A549 (cell line): ENCODE measurements at regions of chr15 and their contacts with region 1.

Region 1: DNA sequence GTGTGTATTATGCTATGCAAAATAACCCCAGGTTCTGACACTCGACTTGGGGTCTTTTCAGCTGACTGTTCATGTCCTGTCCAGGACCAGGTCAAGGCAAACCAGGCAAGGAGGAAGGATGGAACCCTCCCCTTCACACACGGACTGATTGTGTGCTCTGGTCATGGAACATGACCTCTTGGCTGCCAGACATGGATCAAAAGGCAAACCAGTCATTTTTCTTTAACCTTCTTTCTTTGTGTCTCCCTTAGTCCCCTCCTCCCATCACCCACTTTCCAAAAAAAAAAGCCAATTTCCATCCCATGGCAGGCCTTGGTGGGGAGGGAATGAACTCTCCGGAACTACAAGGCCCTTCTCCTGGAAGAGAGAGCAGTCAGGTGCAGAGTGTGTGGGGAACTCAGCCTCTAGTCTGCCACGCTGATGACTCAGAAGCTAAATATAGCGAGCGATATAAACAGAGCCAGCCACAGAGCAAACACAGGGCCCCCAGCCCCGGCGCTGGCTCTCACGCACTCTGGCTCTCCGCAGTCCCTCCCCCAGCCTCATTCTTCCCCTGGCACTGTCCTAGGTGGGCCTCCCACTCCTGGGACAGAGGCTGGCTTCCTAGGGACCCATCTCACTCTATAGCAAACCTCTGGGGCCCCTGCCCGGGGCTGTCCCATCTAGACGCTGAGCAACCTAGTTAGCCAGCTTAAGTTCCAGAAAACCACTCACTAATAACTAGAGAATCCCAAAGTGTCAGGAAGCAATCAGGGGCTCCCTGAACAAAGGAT is 10.0 kb downstream of the BMF start:
- DNase-seq: peak; percentile 83 to 90
- ATAC-seq: peak; percentile 97
- H3K4me3 ChIP-seq: no peak overlapping the region
- H3K27ac ChIP-seq: peak overlapping the region; percentile 68 to 81
- H3K4me1 ChIP-seq: peaks cover 52% of the 10 kb centered on the region
- CTCF ChIP-seq: no peak
- EP300 ChIP-seq: peak; percentile 37 to 43; a peak in 2 of 5 replicates
- POLR2A ChIP-seq: no peak
- RAD21 ChIP-seq: no peak; a peak in 2 of 5 replicates

Region 2: DNA sequence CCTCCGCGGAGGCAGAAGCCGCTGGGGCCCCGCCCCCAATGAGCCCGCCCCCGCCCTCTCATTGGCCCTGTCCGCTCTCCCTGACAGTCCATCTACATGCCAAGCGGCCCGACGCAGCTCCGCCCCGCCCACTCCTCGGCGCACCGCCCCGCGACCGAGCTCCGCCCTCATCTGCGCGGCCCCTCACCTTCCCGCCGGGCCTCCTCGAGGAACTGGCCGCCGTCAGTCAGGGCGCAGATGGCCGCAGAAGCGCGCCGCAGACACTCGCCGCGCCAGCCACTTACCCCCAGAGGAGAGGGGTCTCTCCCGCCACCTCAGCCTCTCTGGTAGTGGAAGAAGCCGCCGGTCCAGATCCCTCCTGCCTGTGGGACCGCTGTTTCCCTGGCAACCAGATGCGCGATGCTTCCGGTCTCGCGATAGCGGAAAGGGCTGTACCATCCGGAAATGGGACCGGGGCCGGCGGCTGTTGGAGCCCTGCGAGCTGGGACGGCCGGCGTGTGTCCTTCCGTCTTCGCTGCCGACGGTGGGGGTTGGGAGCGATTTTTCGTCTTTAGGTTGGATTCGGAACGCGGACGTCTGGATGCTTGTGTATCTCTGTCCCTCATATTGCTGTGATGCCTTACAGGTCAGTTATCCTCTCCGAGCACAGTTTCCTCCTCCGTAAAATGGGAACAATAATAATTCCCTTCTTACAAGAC is 316.1 kb before region 1 on chr15 and contains the start of gene FSIP1:
- CTCF ChIA-PET with region 1: no interaction called
- POLR2A ChIA-PET with region 1: no interaction called
- DNase-seq: peak; percentile 86 to 94
- ATAC-seq: peak; percentile 98 to 99
- H3K4me3 ChIP-seq: peak within 1 kb of the TSS; percentile 76
- H3K27ac ChIP-seq: peak within 1 kb of the TSS; percentile 79 to 88
- H3K4me1 ChIP-seq: peaks cover 15% of the 10 kb centered on the region; the same call in 2 of the 3 replicates
- CTCF ChIP-seq: no peak
- EP300 ChIP-seq: no peak
- POLR2A ChIP-seq: peak; percentile 59
- RAD21 ChIP-seq: no peak
- polyA plus RNA-seq, gene FSIP1: 0.82 and 0.93 TPM in 2 replicates

Region 3: DNA sequence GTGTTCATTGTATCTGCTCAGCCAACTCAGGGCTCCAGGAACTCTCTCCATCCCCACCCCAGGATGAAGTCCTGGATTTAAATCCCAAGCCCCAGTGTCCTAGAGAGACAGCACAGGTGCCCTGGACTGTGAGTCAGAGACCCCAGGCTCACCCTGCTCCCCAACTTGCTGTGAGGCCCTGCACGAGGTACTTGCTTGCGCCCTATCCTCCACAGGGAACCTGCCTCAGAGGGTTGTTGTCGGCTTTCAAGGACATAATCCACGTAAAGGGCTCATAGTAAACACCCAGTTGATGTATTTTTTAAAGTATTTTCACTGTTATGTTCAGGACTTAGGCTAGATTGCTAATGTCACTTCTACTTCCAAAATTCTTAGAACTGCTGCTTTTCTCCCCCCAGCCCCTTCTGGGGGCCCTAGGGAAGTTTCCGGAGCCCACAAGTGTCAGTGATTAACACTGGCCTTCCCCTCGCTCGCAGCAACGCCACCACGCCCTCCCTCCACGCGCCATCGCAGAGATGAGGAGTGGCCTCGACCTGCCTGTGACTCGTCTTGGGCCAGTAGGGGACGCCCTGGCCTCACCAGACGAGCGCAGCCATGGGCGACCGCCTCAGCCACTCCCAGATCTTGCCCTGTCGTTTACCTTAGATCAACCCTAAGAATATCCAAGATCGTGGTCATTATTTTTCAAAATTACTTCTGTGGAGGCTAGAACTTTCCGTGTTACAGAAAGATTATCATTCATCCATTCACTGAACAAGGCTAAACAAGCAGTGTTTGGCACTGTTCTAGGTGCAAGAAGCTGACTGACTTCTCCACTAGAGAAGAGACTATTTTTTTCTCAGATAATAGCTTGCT is 53.7 kb before region 1 on chr15:
- CTCF ChIA-PET with region 1: interaction called, 174 read pairs
- POLR2A ChIA-PET with region 1: no interaction called
- DNase-seq: peak; percentile 78 to 84
- ATAC-seq: peak; percentile 94 to 98
- H3K4me3 ChIP-seq: peak overlapping the region; percentile 29
- H3K27ac ChIP-seq: peak overlapping the region; percentile 61 to 85
- H3K4me1 ChIP-seq: peaks cover 45% of the 10 kb centered on the region
- CTCF ChIP-seq: peak; percentile 83
- EP300 ChIP-seq: no peak
- POLR2A ChIP-seq: no peak
- RAD21 ChIP-seq: peak; percentile 93 to 97

Region 4: GRCh38 chr15:40367686-40368611 is 269.3 kb after region 1 on chr15:
- CTCF ChIA-PET with region 1: no interaction called
- POLR2A ChIA-PET with region 1: no interaction called
- DNase-seq: peak; percentile 70 to 87
- ATAC-seq: peak; percentile 88 to 92
- H3K4me3 ChIP-seq: peak overlapping the region; percentile 33
- H3K27ac ChIP-seq: peak overlapping the region; percentile 55 to 87; a peak in 5 of 6 replicates
- H3K4me1 ChIP-seq: 0 out of 3 replicates have a peak, but pooled peaks cover 7% of the 10 kb centered on the region
- CTCF ChIP-seq: peak; percentile 81
- EP300 ChIP-seq: no peak
- POLR2A ChIP-seq: no peak
- RAD21 ChIP-seq: peak; percentile 35 to 62

Region 5: DNA sequence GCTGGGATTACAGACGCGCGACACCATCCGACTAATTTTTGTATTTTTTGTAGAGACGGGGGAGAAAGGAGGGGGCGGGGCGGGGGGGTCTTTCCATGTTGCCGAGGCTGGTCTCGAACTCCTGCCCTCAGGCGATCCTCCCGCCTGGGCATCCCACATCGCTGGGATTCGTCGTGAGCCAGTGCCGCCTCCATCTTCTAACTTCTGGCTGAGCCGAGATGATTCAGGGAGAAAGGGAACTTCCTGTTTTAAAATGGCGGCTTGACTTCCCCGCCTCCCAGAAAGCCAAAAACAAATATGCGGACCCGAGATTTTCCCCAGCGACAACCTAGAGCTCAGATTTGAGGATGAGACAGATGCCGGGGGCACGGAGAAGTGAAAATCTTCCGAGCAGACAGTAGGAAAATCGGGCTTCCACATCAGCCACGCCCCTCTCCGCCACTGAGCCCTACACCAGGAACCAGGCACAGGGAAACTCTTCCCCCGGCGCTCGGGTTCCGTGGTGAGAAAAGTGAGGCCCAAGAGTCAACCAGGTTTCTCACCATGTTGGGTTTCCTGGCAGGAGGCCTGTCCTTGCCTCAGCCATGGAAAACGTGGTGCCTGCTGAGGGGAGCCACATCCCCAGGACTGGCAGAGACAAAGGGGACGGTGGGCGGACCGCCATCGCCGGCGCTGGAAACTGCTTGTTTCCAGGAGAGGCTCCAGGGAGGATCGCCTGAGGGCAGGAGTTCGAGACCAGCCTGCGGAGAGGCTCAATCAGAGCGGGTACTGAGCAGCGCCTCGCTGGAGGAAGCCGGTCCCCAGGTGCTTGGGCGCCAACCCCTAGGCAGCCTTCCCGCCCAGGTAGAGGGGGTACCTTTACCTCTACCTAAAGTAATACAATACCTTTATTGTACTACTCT is 390.9 kb after region 1 on chr15:
- CTCF ChIA-PET with region 1: no interaction called
- POLR2A ChIA-PET with region 1: no interaction called
- DNase-seq: no peak
- ATAC-seq: no peak
- H3K4me3 ChIP-seq: no peak overlapping the region
- H3K27ac ChIP-seq: no peak overlapping the region
- H3K4me1 ChIP-seq: no peaks in the 10 kb centered on the region
- CTCF ChIP-seq: no peak
- EP300 ChIP-seq: no peak
- POLR2A ChIP-seq: no peak
- RAD21 ChIP-seq: no peak